ENCODE measurements at regions of chr4 and their contacts with region 1.

Region 1: GRCh38 chr4:7917662-7918061 is 22.0 kb downstream of the AFAP1 start:
- DNase-seq: no peak
- H3K4me3 ChIP-seq: no peak overlapping the region
- H3K27ac ChIP-seq: no peak overlapping the region
- H3K4me1 ChIP-seq: no peaks in the 10 kb centered on the region
- H3K27me3 ChIP-seq: no peaks in the 10 kb centered on the region
- CTCF ChIP-seq: no peak

Region 2: DNA sequence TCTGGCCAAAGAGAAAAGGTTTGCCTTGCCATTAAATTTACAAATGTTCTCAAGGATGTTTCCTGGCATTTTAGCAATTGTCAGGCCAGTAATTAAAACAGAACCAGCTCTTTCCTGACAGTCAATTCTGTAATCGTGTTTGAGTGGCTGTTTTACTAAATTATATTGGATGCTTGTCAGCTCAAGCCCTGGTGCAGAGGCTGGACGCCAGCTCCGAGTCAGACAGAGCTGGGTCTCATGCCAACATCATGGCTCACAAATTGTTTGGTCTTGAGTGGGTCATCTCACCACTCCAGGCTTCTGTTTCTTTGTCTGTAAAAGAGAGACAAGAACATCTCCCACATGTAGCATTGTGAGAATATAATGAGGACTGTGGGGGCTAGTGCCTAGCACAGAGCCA is 292.6 kb before region 1 on chr4:
- intact Hi-C with region 1: no loop called
- DNase-seq: no peak
- H3K4me3 ChIP-seq: no peak overlapping the region
- H3K27ac ChIP-seq: no peak overlapping the region
- H3K4me1 ChIP-seq: no peaks in the 10 kb centered on the region
- H3K27me3 ChIP-seq: no peaks in the 10 kb centered on the region
- CTCF ChIP-seq: no peak

Region 3: GRCh38 chr4:8058031-8058479 is 140.4 kb after region 1 on chr4:
- intact Hi-C with region 1: loop called (anchors 5 kb)
- DNase-seq: no peak
- H3K4me3 ChIP-seq: no peak overlapping the region
- H3K27ac ChIP-seq: no peak overlapping the region
- H3K4me1 ChIP-seq: no peaks in the 10 kb centered on the region
- H3K27me3 ChIP-seq: no peaks in the 10 kb centered on the region
- CTCF ChIP-seq: no peak